GM10248 (cell line): ENCODE measurements at regions of chr1 and their contacts with region 1.

Region 1: DNA sequence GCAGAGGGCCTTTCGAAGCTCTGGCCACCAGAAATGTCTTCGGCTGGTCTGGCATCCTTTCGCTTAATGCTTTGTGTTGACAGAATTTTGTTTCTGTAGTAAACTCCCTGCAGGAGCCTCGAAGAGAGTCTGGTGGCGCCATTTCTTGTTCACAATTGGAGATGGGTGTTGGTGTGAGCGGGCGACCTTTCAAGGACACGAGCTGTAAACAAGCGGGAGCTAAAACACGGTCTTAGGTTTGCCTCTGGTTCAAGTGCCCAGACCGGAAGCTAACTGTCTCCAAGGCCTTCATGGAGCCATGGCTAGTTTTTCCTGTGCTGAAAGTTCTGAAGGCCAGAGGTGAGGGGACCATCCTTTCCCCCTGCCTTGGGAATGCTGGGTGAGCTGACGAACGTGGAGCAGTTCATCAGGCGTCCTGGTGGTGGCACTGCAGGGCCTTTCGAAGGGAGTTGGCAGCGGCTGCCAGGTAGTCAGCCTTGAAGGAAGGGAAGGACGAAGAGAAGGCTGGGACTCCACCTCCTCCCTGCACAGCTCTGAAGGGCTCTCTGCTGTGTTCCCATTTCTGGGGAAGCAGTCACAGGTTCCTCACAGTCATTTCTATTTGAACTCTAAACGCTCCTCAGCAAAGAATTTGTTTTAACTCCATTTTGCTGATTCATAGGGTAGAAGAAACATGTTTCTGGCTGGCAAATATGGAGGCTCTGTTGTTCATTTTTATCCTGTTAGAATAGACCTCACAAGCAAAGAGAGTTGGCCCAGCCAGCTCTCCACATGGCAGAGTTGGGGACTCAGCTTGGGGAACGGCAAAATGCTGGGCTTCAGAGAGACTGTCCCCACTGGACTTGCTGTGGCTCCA is 35.2 kb downstream of the URB2 start:
- DNase-seq: peak; percentile 85
- CTCF ChIP-seq: peak; percentile 86

Region 2: GRCh38 chr1:229203030-229203751 is 458.1 kb before region 1 on chr1:
- CTCF ChIA-PET with region 1: no interaction called
- POLR2A ChIA-PET with region 1: no interaction called
- DNase-seq: no peak
- CTCF ChIP-seq: no peak

Region 3: DNA sequence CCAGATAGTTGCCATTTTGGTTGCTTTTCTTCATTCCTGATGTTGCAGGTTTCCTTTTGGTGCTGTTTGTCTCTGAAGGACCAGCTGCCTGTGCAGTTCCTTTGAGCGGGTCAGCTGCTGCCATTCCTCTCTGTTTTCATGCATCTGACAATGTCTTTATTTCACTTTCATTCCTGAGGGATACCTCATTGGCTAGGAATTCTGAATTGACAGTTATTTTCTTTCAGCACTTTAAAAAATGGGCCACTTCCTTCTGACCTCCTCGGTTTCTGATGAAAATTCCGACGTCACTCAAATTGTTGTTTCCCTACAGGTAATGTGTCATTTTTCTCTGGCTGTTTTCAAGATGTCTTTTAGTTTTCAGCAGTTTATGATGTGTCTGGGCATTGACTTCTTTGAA is 343.2 kb before region 1 on chr1:
- CTCF ChIA-PET with region 1: no interaction called
- POLR2A ChIA-PET with region 1: no interaction called
- DNase-seq: no peak
- CTCF ChIP-seq: no peak

Region 4: DNA sequence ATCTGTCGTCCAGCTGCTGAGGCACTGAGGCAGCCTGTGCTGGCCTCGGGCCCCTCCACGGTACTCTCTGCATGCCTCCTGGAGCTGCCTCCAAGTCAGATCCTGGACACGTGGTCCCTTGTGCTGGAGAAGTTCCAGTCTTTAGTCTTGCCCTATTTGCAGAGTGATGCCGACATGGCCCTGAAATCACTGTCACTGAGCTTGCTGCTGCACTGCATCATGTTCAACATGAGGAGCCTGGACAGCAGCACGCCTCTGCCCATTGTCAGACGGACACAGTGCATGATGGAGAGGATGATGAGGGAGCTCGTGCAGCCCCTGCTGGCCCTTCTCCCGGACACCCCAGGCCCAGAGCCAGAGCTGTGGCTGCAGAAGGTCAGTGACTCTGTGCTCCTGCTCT is 25.2 kb before region 1 on chr1:
- CTCF ChIA-PET with region 1: interaction called, 10 read pairs
- POLR2A ChIA-PET with region 1: no interaction called
- DNase-seq: no peak
- CTCF ChIP-seq: no peak

Region 5: DNA sequence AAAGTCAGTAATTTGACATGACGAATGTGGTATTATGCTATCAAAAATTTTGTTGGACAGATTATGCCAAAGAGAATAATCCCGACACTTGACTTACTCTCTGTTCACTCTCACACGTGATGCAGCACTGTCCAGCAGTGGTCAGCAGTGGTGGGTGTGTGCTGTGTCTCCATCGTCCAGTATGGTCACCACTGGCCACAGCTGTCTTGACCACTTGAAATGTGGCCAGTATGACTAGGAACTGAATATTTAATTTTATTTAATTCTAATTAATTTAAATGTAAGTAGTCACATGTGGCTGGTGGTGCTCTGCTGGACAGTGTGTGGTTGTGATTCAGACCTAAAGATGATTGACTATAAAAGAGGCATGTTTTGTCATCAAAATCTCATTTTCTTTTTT is 11.2 kb before region 1 on chr1:
- CTCF ChIA-PET with region 1: interaction called, 27 read pairs
- POLR2A ChIA-PET with region 1: no interaction called
- DNase-seq: no peak
- CTCF ChIP-seq: no peak

Region 6: GRCh38 chr1:229671310-229671709 is 10.1 kb after region 1 on chr1:
- CTCF ChIA-PET with region 1: interaction called, 39 read pairs
- POLR2A ChIA-PET with region 1: no interaction called
- DNase-seq: no peak
- CTCF ChIP-seq: no peak

Region 7: GRCh38 chr1:229714964-229715603 is 53.8 kb after region 1 on chr1:
- CTCF ChIA-PET with region 1: interaction called, 11 read pairs
- POLR2A ChIA-PET with region 1: no interaction called
- DNase-seq: peak; percentile 33
- CTCF ChIP-seq: peak; percentile 48

Region 8: DNA sequence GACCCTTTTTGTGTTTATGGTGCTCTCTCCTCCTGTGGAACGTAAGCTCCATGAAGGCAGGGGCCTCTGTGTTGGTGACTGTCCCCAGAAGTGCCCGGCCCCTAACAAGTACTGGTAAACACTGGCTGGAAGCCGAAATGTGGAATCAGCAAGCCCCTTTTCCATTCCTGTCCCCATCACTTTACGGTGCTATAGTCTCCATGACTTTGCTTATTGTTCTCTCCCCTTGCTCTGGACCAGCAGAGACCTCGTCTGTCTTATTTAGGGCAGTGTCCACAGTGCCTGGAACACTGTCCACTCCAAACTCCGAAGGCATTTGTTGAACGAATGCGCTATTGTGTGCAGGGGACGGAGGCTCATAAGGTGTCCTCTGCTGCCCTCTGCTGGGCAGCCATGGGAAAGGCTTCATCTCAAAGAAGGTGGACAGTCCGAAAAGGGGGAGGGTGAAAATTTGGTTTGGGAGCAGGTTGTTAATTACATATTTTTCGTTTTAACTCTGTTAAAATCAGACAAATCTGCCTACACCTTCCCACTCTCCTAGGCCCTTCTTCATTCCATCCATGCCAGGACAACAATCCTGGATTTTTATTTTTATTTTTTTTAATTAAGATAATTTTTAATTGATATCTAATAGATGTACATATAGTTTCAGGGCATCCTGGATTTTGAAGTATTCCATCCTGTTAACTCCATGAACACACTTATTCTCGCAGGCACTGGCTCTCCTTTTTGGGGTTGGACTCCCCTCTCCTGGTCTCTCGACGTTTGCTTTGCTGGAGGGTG is 649.3 kb after region 1 on chr1:
- CTCF ChIA-PET with region 1: interaction called, 23 read pairs
- POLR2A ChIA-PET with region 1: no interaction called
- DNase-seq: peak; percentile 82
- CTCF ChIP-seq: peak; percentile 79